ENCODE measurements at regions of chr21 and their contacts with region 1.

Region 1: DNA sequence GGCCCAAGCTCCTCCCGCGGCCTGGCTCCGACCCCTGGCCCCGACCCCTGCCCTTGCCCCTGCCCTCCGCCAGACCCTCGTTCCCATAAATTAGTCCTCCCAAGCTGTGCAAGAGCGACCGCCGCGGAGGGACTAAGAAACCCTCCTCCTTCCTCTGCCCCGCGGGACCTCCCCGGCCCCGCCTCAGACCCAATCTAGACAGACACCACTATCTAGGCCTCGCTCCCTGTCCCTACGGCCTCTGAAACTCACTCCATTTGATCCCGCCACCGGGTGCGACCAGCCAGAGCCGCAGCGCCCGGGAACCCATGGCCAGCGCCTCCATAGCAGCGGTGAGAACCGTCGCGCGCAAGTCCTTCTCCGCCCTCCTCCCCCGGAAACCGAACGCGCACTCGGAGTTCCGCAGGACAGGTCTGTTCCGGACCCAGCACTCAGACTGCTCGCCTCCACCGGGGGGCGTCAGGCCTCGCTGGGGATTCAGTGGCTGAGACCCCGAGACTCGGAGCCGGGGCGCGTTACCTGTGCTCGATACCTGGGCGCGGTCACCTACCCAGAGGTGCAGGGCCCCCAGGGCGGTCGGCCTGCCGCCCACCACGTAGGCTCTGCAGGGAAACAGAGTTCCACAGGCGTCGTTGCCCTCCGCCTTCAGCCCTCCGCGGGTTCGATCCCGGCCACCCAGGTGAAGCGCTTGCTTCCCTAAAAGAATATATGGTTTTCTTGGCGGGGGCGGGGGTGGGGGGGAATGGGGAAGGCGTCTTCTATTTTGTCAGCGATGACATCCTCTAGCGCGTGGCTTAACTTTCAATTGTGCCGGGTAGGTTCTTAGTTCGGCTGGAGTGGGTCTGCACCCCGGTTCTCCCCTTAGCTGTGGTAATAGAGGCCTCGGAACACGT is at the start of gene MRPL39:
- DNase-seq: peak; percentile 74 to 92 (median 84)
- H3K4me3 ChIP-seq: peak within 1 kb of the TSS; percentile 66 to 99 (median 87)
- H3K27ac ChIP-seq: peak within 1 kb of the TSS; percentile 45 to 92 (median 79)
- H3K27me3 ChIP-seq: no peaks in the 10 kb centered on the region
- CTCF ChIP-seq: peak; percentile 20 to 76 (median 64)
- total RNA-seq, gene MRPL39: 18.7 to 35.9 (median 26.3) TPM

Region 2: GRCh38 chr21:25557180-25557579 is 50.2 kb before region 1 on chr21:
- intact Hi-C with region 1: no loop called
- DNase-seq: no peak
- H3K4me3 ChIP-seq: no peak overlapping the region
- H3K27ac ChIP-seq: no peak overlapping the region
- H3K27me3 ChIP-seq: no peaks in the 10 kb centered on the region
- CTCF ChIP-seq: no peak

Region 3: GRCh38 chr21:25708467-25709065 is 101.2 kb after region 1 on chr21:
- intact Hi-C with region 1: loop called (anchors 1 to 2 kb)
- DNase-seq: peak in 1 of 10 donors; percentile 51
- H3K4me3 ChIP-seq: no peak overlapping the region
- H3K27ac ChIP-seq: no peak overlapping the region
- H3K27me3 ChIP-seq: no peaks in the 10 kb centered on the region
- CTCF ChIP-seq: peak; percentile 76 to 97 (median 88)

Region 4: DNA sequence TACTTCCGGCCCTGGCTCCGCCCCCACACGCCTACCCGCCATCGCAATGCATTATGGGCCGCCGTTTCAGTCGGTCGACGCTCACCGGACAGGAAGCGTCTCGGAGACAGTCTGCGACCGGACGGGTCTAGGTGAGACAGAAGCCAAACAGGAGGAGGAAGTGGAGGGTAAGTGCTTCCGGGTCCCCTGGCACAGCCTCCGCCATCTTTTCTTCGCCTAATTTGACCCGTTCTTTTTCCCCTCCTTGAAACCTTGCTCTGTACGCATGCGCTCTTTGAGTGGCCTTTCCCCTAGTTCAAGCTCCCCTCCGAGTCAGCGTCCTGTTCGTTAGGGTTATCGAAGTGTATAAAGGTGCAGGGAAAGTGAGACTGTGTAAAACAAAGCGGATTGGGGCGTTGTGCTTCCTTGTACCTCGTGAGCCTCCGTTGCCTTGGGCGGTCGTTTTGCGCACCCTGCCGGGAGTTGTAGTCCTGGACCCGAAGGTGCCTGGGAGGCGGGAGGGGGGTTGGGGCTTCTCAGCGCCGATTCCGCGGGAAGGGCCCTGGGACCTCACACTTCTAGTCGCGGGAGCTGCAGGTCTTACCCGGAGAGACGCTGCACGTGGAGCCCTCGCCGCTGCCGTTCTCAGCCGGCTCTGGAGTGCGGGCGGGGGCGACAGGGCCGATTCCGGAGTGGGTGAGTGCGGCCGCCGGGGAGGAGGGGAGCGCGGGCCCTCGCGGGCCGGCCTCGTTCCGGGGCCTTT is 127.7 kb after region 1 on chr21 and contains the starts of genes ATP5PF and GABPA:
- intact Hi-C with region 1: loop called (anchors 1 to 2 kb)
- DNase-seq: peak; percentile 93 to 98 (median 96)
- H3K4me3 ChIP-seq: peak within 1 kb of the TSS; percentile 56 to 99 (median 93)
- H3K27ac ChIP-seq: peak within 1 kb of the TSS; percentile 96 to 100 (median 100)
- H3K27me3 ChIP-seq: no peaks in the 10 kb centered on the region
- CTCF ChIP-seq: peak in 23 of 56 donors; percentile 5 to 35 (median 9)
- total RNA-seq, gene ATP5PF: 62.6 to 169 (median 131) TPM
- total RNA-seq, gene GABPA: 10.8 to 26.2 (median 17.9) TPM

Region 5: GRCh38 chr21:25862596-25862995 is 255.2 kb after region 1 on chr21:
- intact Hi-C with region 1: loop called in 1 of 2 experiments (anchors 10 kb)
- DNase-seq: no peak
- H3K4me3 ChIP-seq: no peak overlapping the region
- H3K27ac ChIP-seq: no peak overlapping the region
- H3K27me3 ChIP-seq: no peaks in the 10 kb centered on the region
- CTCF ChIP-seq: peak in 55 of 56 donors; percentile 30 to 66 (median 55)

Region 6: DNA sequence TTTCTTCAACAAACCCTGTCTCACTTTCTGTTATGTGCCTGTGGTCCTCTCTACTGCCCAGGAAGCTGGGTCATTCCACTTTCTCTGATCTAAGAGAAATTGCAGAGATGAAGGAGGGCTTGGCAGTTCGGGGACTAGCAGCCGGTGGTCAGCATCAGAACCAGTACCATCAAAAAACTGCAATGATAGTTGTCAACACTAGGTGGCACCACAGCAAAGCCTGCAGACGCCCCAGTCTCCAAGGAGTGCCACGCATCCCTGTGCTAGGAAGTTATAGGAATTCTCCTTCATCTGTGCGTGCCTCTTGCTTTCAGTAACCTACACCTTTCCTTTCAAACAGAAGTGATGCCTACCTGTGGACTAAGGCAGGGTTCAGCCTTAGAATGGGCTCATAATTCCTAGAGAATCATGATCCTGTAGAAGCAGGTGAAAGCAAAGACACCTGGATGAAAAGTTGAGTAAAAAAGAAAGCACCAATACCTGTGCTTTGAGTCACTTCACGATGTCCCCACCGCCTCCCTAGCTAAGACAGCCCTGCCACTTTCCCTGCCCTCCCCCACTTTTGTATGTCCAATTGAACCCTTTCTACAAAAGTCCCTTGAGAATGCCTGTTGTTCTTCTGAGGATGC is 1108.6 kb after region 1 on chr21:
- intact Hi-C with region 1: loop called (anchors 5 to 10 kb)
- DNase-seq: peak in 8 of 10 donors; percentile 44 to 66 (median 52)
- H3K4me3 ChIP-seq: peak overlapping the region in 1 of 59 donors; percentile 8
- H3K27ac ChIP-seq: peak overlapping the region in 2 of 59 donors; percentile 9 to 21
- H3K27me3 ChIP-seq: no peaks in the 10 kb centered on the region
- CTCF ChIP-seq: peak; percentile 64 to 92 (median 84)

Region 7: DNA sequence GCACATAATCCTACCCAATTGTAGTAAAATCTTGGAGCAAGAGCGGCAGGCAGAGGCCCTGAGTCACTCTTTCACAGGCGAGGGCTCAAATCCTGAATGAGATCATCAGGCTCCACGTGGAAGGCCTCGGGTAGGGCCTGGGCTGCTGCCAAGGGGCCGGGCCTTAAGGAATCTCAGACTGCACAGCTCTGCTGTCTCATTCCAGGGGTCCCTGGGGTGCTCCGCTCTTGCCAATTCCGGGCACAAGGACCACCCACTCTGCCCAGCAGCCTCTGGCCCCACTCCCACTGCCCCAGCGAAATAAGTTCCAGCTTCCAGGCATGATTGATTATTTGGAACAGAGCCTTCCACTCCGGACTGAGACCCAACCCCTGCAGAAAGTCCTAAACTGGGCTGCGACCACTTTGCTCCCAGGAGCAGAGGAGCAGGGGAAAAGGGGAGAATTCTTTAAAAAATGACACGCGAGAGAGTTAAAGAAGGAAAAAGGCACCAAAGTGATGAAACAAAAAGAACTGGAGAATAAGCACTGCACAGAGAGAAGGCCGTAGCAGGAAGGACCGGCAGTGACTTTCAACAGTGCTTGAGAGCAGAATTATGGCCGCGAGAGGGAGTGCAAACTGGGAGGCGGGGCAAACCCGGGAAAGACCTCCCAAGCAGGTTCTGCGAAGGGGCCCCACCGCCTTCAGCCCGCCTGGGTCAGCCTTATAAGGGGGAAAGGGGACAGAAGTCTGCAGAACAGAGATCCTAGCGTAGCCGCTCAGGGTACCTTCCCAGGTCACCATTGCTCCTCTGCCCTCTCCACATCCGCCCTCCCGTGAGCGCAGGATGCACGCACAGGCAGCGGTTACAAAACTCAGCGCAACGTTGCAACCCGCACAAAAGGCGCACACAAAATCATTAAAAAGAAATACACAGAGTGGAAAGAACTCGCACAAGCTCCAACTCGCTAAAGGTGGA is 1235.9 kb after region 1 on chr21:
- intact Hi-C with region 1: loop called in 1 of 2 experiments (anchors 5 kb)
- DNase-seq: peak; percentile 76 to 95 (median 89)
- H3K4me3 ChIP-seq: peak overlapping the region; percentile 63 to 94 (median 84)
- H3K27ac ChIP-seq: peak overlapping the region in 58 of 59 donors; percentile 45 to 100 (median 99)
- H3K27me3 ChIP-seq: no peaks in the 10 kb centered on the region
- CTCF ChIP-seq: peak in 42 of 56 donors; percentile 6 to 57 (median 35)

Measured in dorsolateral prefrontal cortex (tissue), 120 donors.